ENCODE measurements at regions of chr5 and their contacts with region 1.

Region 1: GRCh38 chr5:159100025-159100781 is 487 bp upstream of the EBF1 start:
- DNase-seq: peak; percentile 91
- H3K4me3 ChIP-seq: peak overlapping the region; percentile 58
- H3K27ac ChIP-seq: no peak overlapping the region
- H3K4me1 ChIP-seq: peaks cover 2% of the 10 kb centered on the region
- H3K27me3 ChIP-seq: peaks cover 13% of the 10 kb centered on the region
- CTCF ChIP-seq: no peak

Region 2: GRCh38 chr5:158770506-158770905 is 329.7 kb before region 1 on chr5:
- CTCF ChIA-PET with region 1: no interaction called
- POLR2A ChIA-PET with region 1: no interaction called
- intact Hi-C with region 1: loop called (anchors 5 kb)
- DNase-seq: peak; percentile 30
- H3K4me3 ChIP-seq: no peak overlapping the region
- H3K27ac ChIP-seq: no peak overlapping the region
- H3K4me1 ChIP-seq: no peaks in the 10 kb centered on the region
- H3K27me3 ChIP-seq: no peaks in the 10 kb centered on the region
- CTCF ChIP-seq: peak; percentile 55

Region 3: DNA sequence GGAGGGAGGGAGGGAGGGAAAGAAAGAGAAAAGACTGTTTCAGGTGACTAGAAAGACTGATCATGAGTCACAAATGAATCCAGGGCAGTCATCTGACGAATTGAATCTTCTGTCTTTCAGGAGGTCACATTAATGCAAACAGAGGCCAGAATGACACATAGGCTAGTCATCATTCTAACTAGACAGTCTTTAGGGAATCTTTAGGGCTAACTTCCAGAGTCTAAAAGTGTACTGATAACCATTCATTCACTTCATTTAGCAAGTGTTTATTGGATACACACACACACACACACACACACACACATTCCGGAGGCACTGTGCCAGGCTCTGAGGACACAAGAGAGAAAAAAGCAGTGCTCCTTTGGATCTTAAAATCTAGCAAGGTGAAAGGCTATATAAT is 157.1 kb before region 1 on chr5:
- CTCF ChIA-PET with region 1: no interaction called
- POLR2A ChIA-PET with region 1: no interaction called
- intact Hi-C with region 1: loop called (anchors 5 kb)
- DNase-seq: peak; percentile 3
- H3K4me3 ChIP-seq: no peak overlapping the region
- H3K27ac ChIP-seq: no peak overlapping the region
- H3K4me1 ChIP-seq: no peaks in the 10 kb centered on the region
- H3K27me3 ChIP-seq: no peaks in the 10 kb centered on the region
- CTCF ChIP-seq: no peak

Measured in A673 (cell line).